ENCODE measurements at regions of chr5 and their contacts with region 1.

Region 1: GRCh38 chr5:317086-317811 is 4.3 kb upstream of the AHRR start:
- DNase-seq: peak in 1 of 2 donors; percentile 61
- ATAC-seq: peak; percentile 70

Region 2: DNA sequence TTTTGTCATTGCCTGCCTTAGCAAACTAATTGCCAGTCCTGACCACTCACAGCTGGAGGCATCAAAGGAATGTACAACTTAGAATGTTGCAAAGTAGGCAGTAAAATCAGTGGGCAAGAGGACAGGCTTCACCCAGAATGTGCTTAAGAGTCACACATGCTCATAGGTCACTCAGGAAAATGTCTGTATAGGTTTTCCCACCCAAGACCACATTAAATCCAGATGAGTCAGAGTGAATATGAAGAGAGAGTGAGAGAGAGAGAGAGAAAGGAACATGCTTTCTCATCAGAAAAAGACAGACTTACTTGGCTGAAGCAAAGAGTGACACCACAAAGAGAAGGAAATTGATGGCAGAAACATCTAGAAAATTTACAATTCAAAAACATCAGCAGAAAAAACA is 187.4 kb before region 1 on chr5:
- intact Hi-C with region 1: no loop called
- DNase-seq: no peak
- ATAC-seq: no peak

Region 3: DNA sequence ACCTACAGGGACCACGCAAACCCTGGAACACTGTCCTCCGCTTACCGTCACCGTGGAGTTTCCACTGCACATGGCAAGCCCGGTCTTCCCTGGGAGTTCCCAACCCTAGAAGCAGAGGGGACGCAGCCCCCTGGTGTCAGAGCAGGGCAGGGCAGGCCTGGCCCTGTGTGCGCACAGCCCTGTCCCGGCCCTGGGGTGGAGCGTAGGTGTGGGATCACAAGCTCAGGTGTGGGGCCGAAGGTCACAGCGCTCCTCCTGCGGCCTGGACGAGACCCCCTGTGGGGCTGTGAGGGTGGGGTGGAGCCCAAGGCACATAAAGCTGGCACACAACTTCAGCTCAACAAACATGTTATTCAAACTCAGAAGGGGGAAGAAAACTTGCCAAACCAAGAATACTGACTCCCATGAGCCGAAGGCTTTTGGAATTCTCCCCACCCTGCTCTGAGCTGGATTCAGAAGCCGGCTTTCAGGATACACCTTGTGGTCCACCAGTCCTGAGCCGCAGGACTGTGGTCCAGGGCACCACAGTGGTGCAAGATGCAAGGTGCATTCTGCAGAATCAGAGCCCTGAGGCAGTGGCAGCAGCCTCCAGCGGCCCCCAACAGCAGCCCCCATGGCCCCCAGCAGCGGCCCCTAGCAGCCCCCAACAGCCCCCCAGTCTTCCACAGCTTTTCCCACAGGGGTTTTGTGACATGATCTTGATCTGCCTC is 113.9 kb after region 1 on chr5:
- intact Hi-C with region 1: loop called in 1 of 2 experiments (anchors 10 kb)
- DNase-seq: peak; percentile 64 to 79
- ATAC-seq: peak; percentile 87

Region 4: DNA sequence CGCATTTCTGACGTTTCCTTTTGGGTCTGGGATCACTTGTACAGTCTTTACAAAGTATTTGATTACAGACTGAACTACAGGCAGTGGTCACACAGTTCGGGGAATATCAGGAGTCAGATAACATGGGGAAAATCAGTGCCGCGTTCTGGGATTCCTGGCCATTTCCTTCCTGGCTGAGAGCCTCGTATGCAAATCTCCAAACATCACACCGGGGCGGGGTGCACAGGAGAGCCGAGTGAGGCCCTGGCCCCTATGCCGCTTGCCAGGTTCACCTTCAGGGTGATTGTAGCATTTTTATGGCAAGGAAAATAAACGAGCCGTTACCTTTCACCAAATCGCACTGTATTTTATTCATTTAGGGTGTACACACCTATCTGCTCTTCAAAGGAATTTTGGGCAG is 236.6 kb after region 1 on chr5:
- intact Hi-C with region 1: no loop called
- DNase-seq: peak; percentile 76 to 89
- ATAC-seq: peak; percentile 83